Left cardiac atrium (tissue), 4 donors: ENCODE measurements at regions of chr1 and their contacts with region 1.

Region 1: DNA sequence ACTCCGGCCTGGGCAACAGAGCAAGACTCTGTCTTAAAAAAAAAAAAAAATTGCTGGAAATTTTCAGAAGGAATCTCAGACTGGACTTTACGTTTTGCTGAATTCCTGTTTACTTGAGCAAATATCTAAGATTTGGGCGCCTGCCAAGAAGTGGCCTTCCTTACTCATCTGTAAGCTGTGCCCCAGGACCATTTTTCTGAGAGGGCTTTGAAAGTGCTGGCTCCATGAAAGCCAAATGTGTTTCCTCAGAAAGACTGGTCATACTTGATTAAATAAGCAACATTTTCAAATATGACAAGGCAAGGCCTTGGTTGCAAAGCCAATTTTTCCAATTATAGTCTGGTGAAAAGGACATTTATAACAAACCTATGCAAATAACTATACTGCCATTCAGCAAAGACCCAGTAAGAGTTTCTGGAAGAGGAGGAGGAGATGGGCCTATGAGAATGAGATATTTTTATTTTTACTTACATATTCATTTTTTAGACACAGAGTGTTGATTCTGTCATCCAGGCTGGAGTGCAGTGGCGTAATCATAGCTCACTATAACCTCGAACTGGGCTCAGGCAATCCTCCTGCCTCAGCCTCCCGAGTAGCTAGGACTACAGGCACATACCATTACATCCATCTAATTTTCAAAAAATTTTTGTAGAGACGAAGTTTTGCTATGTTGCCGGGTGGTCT is 56.3 kb upstream of the HTR1D start:
- DNase-seq: no peak
- ATAC-seq: no peak

Region 2: DNA sequence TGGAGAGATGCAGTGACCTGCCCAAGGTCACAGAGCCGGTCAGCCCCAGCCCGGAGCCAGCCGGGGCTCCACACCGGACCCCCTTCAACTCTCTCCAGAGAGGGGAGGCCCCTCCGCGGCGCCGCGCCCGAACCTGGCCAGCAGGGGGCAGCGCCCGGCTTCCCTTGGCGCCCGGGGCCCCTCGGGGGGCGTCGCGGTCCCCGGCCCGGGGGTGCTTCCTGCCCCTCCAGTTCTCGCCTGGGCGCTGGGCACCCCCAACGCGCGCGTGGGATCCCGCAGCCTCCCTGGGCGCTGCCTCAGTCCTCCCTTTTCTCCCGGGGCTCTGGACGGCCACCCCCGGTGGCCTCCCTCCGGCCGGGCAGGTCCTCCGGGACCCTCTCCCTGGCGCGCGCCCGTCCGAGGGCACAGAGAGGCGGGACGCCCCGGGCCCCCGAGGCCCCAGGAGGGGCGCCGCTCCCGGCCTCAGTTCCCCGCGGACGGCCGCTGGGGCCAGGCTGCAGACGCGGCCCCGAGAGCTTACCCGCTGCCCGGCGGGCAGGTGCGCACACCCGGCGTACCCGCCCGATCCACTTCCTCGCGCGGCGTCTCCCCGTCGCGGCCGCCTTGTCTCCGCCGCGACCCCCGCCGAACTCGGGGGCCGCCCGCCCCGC is 56.7 kb before region 1 on chr1:
- intact Hi-C with region 1: loop called in 1 of 2 experiments (anchors 10 kb)
- DNase-seq: peak; percentile 26
- ATAC-seq: peak; percentile 48 to 57